ENCODE measurements at regions of chr9 and their contacts with region 1.

Region 1: DNA sequence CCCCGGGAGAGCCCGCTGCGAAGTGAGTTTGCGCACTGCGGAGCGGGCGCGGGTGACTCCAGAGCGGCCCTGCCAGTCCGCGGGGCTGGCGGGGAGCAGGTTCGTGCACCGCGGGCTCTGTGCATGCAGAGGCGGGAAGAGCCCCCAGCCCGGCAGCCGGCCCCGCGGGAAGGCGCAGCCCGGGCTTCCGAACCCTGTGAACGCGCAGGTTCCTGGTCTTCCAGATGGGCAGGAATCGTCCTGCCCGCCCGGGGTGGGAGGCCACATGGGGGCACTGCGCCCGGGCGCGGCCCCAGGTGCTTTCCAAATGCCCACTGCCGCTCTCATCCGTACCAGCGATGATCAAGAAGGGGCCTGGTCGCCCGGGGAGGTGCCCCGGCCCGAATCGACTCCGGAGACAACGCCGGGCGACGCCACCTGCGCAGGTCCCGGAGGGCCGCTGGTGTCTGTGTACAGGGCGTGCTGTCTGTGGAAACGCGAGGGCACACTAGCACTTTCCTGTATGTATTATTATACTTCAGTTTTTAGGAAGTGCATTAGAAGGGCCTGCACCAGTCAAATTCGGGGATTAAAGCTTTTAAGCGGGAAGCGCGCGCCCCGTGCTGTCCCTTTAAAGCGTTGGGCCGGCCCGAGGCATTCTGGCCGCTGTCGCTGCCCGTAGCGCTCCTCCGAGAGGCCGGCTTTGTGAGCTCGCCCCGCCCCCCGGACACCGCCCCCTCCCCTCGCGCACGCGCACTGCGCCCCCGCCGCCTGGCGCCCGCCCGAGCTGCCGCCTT is at the start of gene WDR5:
- DNase-seq: peak; percentile 74
- H3K4me3 ChIP-seq: peak within 1 kb of the TSS; percentile 91
- CTCF ChIP-seq: peak; percentile 23

Region 2: DNA sequence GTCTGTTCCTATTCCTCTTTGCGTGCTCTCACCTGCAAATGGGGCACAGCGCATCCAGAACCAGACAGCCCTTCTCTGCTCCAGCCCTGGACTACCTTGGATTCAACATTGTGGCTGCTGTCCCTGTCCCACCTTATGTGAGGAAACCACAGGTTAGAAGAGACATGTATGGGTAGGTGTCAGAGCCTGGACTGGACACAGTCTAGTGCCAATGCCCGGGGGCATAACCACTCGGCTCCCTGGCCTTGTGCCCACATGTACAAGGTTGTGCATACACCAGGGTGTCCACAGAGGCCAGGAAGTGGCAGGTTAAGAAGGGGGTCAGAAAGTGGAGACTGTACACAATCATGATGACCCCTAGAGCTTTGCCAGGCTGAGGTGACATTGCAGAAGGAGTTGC is 45.6 kb before region 1 on chr9:
- in situ Hi-C with region 1: loop called (anchors 5 kb)
- DNase-seq: no peak
- H3K4me3 ChIP-seq: no peak overlapping the region
- CTCF ChIP-seq: no peak